ENCODE measurements at regions of chr22 and their contacts with region 1.

Region 1: GRCh38 chr22:32796865-32797573 is 4.5 kb upstream of the TIMP3 start:
- DNase-seq: peak in 1 of 2 experiments; percentile 84
- H3K4me3 ChIP-seq: no peak overlapping the region
- H3K27ac ChIP-seq: no peak overlapping the region
- H3K4me1 ChIP-seq: peaks cover 0 to 2% (median 1%) of the 10 kb centered on the region in 4 experiments; a peak in 3 of 7 replicates
- H3K27me3 ChIP-seq: peaks cover 0 to 8% (median 6%) of the 10 kb centered on the region in 4 experiments; a peak in 3 of 7 replicates
- CTCF ChIP-seq: peak; percentile 84 to 95 (median 94)
- EP300 ChIP-seq: no peak
- POLR2A ChIP-seq: no peak
- RAD21 ChIP-seq: peak; percentile 91 to 95

Region 2: DNA sequence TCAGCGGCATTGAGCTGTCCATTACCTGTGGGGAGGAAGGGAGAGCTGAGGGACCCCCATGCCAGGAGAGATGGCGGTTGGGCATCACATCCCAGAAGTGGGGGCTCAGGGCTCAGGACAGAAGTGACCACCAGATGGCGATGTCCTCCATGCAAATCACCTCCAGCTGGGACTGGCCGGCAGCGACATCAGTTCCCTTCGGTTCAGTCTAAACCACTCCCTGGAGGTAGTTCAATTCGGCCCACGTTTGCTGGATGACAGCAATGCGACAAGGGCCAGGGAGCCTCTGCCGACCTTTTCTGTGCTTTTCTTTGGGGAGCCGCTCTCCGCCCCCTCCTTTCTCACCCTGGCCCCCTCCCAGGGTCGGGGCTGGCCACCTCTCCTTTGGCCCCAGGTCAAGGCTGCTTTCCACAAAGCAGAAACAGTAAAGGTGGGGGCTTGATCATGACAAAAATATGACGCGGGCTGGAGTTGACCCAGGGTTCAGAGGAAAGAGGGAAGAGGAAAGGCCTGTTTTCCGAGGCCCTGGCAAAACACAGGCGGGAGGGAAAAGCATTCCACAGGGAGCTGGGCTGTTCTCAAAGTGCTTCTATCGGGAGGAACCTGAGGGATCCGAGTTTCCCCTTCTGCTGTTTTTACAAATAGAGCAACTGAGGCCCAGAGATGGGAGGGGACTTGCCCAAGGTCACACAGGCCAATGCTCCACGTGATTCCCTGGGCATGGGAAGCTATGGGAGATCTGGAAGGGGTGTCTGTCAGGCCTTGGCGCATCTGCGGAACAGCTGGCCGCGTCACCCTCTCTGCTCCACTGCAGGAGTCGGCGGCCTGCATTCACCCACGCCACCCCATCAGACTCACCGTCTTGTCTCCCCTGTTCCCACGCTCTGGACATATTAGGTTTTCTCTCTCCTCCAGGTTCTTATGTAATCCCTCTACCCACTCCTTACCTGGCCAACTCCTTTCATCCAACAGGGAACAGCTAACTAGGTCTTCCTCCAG is 267.7 kb before region 1 on chr22:
- CTCF ChIA-PET with region 1: interaction called, 102 read pairs
- POLR2A ChIA-PET with region 1: no interaction called
- DNase-seq: peak; percentile 63 to 84
- H3K4me3 ChIP-seq: no peak overlapping the region
- H3K27ac ChIP-seq: no peak overlapping the region
- H3K4me1 ChIP-seq: no peaks in the 10 kb centered on the region; a peak in 1 of 7 replicates
- H3K27me3 ChIP-seq: no peaks in the 10 kb centered on the region
- CTCF ChIP-seq: peak; percentile 82 to 96 (median 93)
- EP300 ChIP-seq: no peak
- POLR2A ChIP-seq: no peak
- RAD21 ChIP-seq: peak; percentile 93 to 96

Region 3: DNA sequence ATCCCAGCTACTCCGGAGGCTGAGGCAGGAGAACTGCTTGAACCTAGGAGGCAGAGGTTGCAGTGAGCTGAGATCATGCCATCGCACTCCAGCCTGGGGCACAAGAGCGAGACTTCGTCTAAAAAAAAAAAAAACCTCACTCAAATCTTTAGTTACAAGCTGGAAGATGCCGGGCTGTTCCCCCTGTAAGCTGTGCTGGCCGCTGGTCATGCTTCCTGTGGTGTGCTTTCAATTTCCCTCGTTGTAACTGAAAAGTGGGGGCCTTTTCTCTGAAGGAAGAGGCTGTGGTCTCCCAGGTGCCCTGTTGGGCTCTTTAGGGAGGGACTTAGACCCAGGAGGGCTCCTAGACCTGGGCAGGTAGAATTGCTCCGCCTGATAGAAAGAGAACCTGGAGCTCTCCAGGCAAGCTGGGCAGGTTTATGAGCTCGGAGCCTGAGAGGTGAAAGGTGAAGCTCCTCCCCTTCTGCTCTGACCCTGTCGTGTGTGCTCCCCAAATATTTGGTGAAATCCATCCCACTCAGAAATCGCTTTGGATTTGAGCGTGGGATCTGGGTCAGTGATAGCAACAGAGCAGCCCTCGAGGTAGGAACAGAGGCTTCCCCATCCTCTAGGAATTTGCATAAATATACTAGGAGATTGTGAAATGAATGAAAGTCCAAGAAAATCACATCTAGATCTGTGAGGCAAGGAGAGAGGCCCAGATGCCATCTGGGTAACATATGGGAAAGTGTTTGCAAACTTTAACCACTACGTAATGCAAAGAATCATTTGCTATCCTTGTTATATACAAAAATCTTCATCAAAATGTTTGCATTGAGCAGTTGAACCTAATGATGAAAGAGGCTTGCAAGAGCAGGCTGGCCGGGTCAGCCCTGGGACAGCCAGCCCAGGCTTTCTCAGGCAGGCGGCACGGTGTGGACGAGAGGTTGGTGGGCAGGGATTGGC is 168.1 kb before region 1 on chr22:
- CTCF ChIA-PET with region 1: interaction called, 32 read pairs
- POLR2A ChIA-PET with region 1: no interaction called
- DNase-seq: no peak
- H3K4me3 ChIP-seq: no peak overlapping the region
- H3K27ac ChIP-seq: no peak overlapping the region
- H3K4me1 ChIP-seq: peaks cover 0 to 2% (median 0%) of the 10 kb centered on the region in 4 experiments; a peak in 1 of 7 replicates
- H3K27me3 ChIP-seq: peaks cover 0 to 6% (median 1%) of the 10 kb centered on the region in 4 experiments; a peak in 2 of 7 replicates
- CTCF ChIP-seq: no peak
- EP300 ChIP-seq: no peak
- POLR2A ChIP-seq: no peak
- RAD21 ChIP-seq: no peak

Region 4: GRCh38 chr22:32674925-32675825 is 121.8 kb before region 1 on chr22:
- CTCF ChIA-PET with region 1: interaction called, 32 read pairs
- POLR2A ChIA-PET with region 1: no interaction called
- DNase-seq: no peak
- H3K4me3 ChIP-seq: no peak overlapping the region
- H3K27ac ChIP-seq: no peak overlapping the region
- H3K4me1 ChIP-seq: no peaks in the 10 kb centered on the region
- H3K27me3 ChIP-seq: no peaks in the 10 kb centered on the region; a peak in 1 of 7 replicates
- CTCF ChIP-seq: no peak
- EP300 ChIP-seq: no peak
- POLR2A ChIP-seq: no peak
- RAD21 ChIP-seq: no peak

Region 5: GRCh38 chr22:32775957-32776356 is 21.1 kb before region 1 on chr22:
- CTCF ChIA-PET with region 1: interaction called, 47 read pairs
- POLR2A ChIA-PET with region 1: interaction called, 3 read pairs
- DNase-seq: no peak
- H3K4me3 ChIP-seq: no peak overlapping the region
- H3K27ac ChIP-seq: no peak overlapping the region
- H3K4me1 ChIP-seq: peaks cover 0 to 4% (median 3%) of the 10 kb centered on the region in 4 experiments; a peak in 3 of 7 replicates
- H3K27me3 ChIP-seq: no peaks in the 10 kb centered on the region
- CTCF ChIP-seq: peak; percentile 51 to 72 (median 59)
- EP300 ChIP-seq: no peak
- POLR2A ChIP-seq: no peak
- RAD21 ChIP-seq: peak; percentile 34 to 50

Region 6: GRCh38 chr22:32830473-32830872 is 33.5 kb after region 1 on chr22:
- CTCF ChIA-PET with region 1: interaction called, 20 read pairs
- POLR2A ChIA-PET with region 1: interaction called, 4 read pairs
- DNase-seq: no peak
- H3K4me3 ChIP-seq: no peak overlapping the region
- H3K27ac ChIP-seq: no peak overlapping the region
- H3K4me1 ChIP-seq: peaks cover 5 to 14% (median 8%) of the 10 kb centered on the region in 4 experiments
- H3K27me3 ChIP-seq: no peaks in the 10 kb centered on the region
- CTCF ChIP-seq: no peak
- EP300 ChIP-seq: no peak
- POLR2A ChIP-seq: no peak
- RAD21 ChIP-seq: no peak